Aorta (tissue), 5 donors: ENCODE measurements at regions of chr5 and their contacts with region 1.

Region 1: GRCh38 chr5:159106569-159107282 is 7.0 kb upstream of the EBF1 start:
- DNase-seq: peak; percentile 87 to 95
- ATAC-seq: peak; percentile 91
- H3K4me3 ChIP-seq: no peak overlapping the region
- H3K27ac ChIP-seq: no peak overlapping the region
- H3K4me1 ChIP-seq: no peaks in the 10 kb centered on the region
- H3K27me3 ChIP-seq: no peaks in the 10 kb centered on the region

Region 2: DNA sequence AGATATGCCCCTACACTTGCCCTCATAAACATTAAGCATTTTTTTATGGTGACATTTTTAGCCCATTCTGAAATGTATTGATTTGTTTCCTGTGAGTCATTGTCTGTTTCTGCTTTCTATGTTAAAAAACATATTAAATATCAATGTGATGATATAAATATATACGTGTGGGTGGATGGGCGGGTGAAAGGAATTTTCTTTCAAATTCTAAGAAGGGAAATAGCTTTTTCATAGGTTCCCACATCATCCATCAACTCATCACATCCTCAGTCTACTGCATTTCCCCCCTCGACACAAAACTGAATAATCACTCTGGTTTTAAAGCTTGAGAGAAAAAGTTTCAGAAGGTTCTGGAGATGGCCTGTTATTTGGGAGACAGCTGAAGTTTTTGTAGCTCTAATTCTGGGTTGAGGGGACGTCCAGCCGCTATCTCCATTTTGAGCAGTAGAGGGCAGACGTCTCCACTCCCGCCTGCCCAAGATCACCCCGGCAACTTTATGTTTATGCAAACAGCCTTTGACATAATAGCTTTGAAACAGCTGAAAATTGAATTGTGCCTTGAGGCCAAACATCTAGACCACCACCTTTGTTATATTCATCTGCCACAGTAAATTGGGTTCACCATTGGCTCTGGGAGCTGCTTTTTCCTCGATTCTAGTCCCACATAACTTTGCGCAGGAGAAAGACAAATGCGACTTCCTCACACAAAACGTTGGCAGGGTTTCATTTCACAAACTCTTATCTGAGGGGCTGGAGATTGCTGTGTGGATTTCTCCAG is 1031.5 kb before region 1 on chr5:
- intact Hi-C with region 1: loop called (anchors 5 to 10 kb)
- DNase-seq: peak; percentile 62 to 75
- ATAC-seq: peak; percentile 90
- H3K4me3 ChIP-seq: peak overlapping the region; percentile 41 to 47
- H3K27ac ChIP-seq: no peak overlapping the region
- H3K4me1 ChIP-seq: no peaks in the 10 kb centered on the region
- H3K27me3 ChIP-seq: no peaks in the 10 kb centered on the region

Region 3: DNA sequence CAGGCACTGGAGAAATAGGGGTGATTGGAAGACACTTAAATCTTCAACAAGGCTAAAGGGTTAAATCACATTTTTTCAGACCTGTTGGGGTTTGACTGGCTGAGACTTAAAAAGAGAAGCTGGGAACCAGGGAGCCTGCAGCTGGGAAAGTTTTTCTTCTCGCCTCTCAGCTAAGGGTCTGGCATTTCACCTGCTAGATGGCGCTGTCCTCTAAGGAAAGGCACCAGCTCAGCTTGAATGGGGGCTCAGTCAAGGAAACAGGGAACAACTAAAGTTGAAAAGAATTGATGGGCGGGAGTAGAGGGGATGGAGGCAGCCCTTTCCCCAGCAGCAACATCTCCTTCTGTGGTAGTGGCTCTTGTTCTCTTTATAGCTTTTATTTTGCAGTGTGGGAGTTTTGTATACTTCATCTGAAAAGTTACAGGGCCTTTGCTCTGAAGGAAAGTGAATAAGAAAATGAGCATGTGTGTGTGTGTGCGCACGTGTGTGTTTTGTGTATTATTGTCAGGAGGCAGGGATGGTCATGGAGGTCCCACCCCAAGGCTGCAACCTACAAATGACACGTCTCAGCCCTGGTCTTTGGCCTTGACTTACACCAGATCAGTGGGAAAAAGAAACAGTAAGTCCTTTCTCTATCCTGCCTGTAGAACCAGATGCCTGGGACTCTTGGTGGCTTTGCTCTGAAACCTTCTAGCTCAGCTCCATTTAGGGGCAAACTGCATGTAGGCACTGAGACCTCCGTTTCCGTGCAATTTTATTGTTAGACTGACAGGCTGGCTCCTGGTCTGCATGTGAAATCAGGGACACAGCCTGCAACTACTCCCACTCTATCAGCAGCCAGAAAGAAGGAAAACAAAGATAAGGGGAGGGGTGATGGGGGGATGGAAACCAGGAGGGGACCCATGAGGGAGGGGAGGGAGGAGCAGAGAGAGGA is 931.5 kb before region 1 on chr5:
- intact Hi-C with region 1: loop called (anchors 1 to 2 kb)
- DNase-seq: peak; percentile 81 to 85
- ATAC-seq: peak; percentile 87
- H3K4me3 ChIP-seq: no peak overlapping the region
- H3K27ac ChIP-seq: no peak overlapping the region
- H3K4me1 ChIP-seq: no peaks in the 10 kb centered on the region
- H3K27me3 ChIP-seq: no peaks in the 10 kb centered on the region

Region 4: DNA sequence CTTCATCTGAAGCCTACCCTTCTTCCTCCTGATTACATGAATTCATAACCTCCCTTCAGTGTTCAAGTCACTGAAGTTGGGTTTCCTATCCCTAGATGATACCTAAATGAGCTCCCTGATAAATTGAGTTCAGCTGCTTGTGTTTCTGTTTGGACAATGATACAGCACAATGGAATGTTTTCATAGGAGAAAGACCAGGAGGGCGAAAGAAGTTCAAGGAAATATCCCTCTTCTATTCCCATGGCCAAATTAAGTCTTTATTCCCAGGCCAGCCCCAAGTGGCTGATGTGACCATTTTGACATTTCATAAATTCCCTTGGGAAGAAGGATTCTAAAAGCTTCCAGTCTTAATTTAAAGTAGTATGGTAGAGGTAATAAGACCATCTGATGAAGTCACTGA is 691.9 kb before region 1 on chr5:
- intact Hi-C with region 1: loop called in 1 of 2 experiments (anchors 5 kb)
- DNase-seq: no peak
- ATAC-seq: peak; percentile 76
- H3K4me3 ChIP-seq: no peak overlapping the region
- H3K27ac ChIP-seq: peak overlapping the region in 1 of 2 donors; percentile 21
- H3K4me1 ChIP-seq: peaks cover 0 to 5% of the 10 kb centered on the region in 2 donors
- H3K27me3 ChIP-seq: no peaks in the 10 kb centered on the region

Region 5: DNA sequence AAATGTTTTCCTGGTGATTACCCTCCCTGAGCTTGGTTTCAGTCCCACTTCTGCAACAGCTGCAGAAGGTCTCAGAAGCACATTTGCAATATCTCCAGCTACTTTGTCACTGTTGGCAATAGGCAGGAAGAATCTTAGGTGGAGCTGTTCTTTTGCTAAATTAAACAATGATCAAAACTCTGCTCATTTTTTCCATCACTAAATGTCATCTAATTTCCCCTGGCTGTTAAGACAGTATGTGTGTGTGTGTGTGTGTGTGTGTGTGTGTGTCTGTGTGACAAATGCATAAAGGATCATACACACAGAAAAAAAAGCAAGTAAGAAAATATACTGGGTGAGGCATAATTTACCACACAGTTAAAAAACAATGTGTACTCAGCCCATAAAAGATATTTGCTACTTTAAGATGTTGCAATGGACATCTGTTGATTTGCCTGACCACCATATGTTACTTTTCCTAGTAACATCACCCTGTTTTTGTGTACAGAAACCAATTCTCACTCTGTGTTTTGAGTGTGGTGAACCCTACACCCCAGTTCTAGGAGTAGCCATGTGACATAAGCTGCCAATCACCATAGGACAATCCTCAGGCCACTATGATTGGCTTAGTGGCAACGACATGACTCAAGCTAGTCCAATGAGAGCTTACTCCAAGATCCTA is 675.2 kb before region 1 on chr5:
- intact Hi-C with region 1: no loop called
- DNase-seq: no peak
- ATAC-seq: peak; percentile 66
- H3K4me3 ChIP-seq: no peak overlapping the region
- H3K27ac ChIP-seq: no peak overlapping the region
- H3K4me1 ChIP-seq: no peaks in the 10 kb centered on the region
- H3K27me3 ChIP-seq: no peaks in the 10 kb centered on the region

Region 6: GRCh38 chr5:158485604-158486081 is 621.1 kb before region 1 on chr5:
- intact Hi-C with region 1: loop called in 1 of 2 experiments (anchors 10 kb)
- DNase-seq: peak; percentile 66 to 76
- ATAC-seq: peak; percentile 81
- H3K4me3 ChIP-seq: no peak overlapping the region
- H3K27ac ChIP-seq: no peak overlapping the region
- H3K4me1 ChIP-seq: no peaks in the 10 kb centered on the region
- H3K27me3 ChIP-seq: no peaks in the 10 kb centered on the region

Region 7: GRCh38 chr5:158695595-158696330 is 411.0 kb before region 1 on chr5:
- intact Hi-C with region 1: loop called (anchors 2 kb)
- DNase-seq: peak; percentile 79 to 92
- ATAC-seq: peak; percentile 86
- H3K4me3 ChIP-seq: no peak overlapping the region
- H3K27ac ChIP-seq: no peak overlapping the region
- H3K4me1 ChIP-seq: peaks cover 2 to 18% of the 10 kb centered on the region in 2 donors
- H3K27me3 ChIP-seq: no peaks in the 10 kb centered on the region

Region 8: GRCh38 chr5:158875272-158875679 is 231.4 kb before region 1 on chr5:
- intact Hi-C with region 1: loop called in 1 of 2 experiments (anchors 10 kb)
- DNase-seq: no peak
- ATAC-seq: peak; percentile 40
- H3K4me3 ChIP-seq: peak overlapping the region; percentile 26 to 87
- H3K27ac ChIP-seq: peak overlapping the region in 1 of 2 donors; percentile 87
- H3K4me1 ChIP-seq: peaks cover 6 to 29% of the 10 kb centered on the region in 2 donors
- H3K27me3 ChIP-seq: no peaks in the 10 kb centered on the region